Sigmoid colon (tissue), 7 donors: ENCODE measurements at regions of chr20 and their contacts with region 1.

Region 1: GRCh38 chr20:62010551-62011402 is 54.9 kb downstream of the TAF4 start:
- DNase-seq: no peak
- H3K4me3 ChIP-seq: no peak overlapping the region
- H3K27ac ChIP-seq: no peak overlapping the region
- H3K4me1 ChIP-seq: peaks cover 0 to 18% (median 10%) of the 10 kb centered on the region in 4 donors
- H3K27me3 ChIP-seq: no peaks in the 10 kb centered on the region
- CTCF ChIP-seq: peak; percentile 16 to 66 (median 58)
- EP300 ChIP-seq: no peak
- POLR2A ChIP-seq: no peak

Region 2: DNA sequence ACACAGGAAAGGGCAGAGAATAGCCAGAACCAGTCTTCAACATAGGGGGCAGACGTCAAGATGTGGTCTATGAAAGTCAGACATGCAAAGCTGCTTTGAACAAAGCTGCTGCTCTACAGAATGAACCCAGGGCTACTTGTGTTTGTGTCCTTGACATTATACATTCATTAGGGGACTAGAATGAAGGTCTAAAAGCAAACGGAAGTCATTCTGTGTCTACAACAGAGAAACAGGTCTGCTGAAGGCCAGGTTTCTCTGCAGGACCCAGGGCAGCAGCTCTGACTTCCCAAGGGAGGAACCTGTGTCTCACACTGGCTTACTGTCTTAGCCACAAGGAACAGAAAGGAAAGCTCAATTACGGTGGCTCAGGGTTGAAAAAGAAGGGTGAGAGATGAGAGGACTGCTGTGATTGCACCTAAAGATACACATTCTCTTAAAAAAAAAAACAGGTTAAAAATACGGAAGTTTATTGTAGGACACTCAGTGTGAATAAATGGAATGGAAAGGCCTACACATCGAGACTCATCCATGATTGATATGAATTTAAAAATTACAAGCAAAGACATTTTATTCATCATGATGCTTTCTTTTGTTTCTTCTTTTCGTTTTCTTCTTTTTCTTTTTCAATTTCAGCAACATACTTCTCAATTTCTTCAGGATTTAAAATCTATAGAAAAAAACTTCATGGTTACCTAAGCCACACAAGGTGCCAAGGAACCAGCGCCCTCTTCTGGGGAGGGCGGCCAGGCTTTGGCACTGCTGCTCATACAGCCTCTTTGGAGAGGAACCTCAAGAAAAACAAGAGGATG is 125.7 kb after region 1 on chr20:
- intact Hi-C with region 1: loop called (anchors 2 kb)
- DNase-seq: no peak
- H3K4me3 ChIP-seq: no peak overlapping the region
- H3K27ac ChIP-seq: peak overlapping the region in 1 of 4 donors; percentile 17
- H3K4me1 ChIP-seq: peaks cover 0 to 27% (median 11%) of the 10 kb centered on the region in 4 donors
- H3K27me3 ChIP-seq: no peaks in the 10 kb centered on the region
- CTCF ChIP-seq: peak; percentile 36 to 79 (median 66)
- EP300 ChIP-seq: no peak
- POLR2A ChIP-seq: no peak

Region 3: GRCh38 chr20:62156592-62157386 is 146.0 kb after region 1 on chr20:
- intact Hi-C with region 1: loop called (anchors 5 kb)
- DNase-seq: no peak
- H3K4me3 ChIP-seq: no peak overlapping the region
- H3K27ac ChIP-seq: no peak overlapping the region
- H3K4me1 ChIP-seq: peaks cover 0 to 12% (median 12%) of the 10 kb centered on the region in 4 donors
- H3K27me3 ChIP-seq: no peaks in the 10 kb centered on the region
- CTCF ChIP-seq: peak; percentile 38 to 70 (median 50)
- EP300 ChIP-seq: no peak
- POLR2A ChIP-seq: no peak

Region 4: GRCh38 chr20:62186887-62187866 is 176.4 kb after region 1 on chr20:
- intact Hi-C with region 1: no loop called
- DNase-seq: no peak
- H3K4me3 ChIP-seq: no peak overlapping the region
- H3K27ac ChIP-seq: no peak overlapping the region
- H3K4me1 ChIP-seq: peaks cover 0 to 20% (median 17%) of the 10 kb centered on the region in 4 donors
- H3K27me3 ChIP-seq: no peaks in the 10 kb centered on the region
- CTCF ChIP-seq: no peak
- EP300 ChIP-seq: no peak
- POLR2A ChIP-seq: no peak

Region 5: DNA sequence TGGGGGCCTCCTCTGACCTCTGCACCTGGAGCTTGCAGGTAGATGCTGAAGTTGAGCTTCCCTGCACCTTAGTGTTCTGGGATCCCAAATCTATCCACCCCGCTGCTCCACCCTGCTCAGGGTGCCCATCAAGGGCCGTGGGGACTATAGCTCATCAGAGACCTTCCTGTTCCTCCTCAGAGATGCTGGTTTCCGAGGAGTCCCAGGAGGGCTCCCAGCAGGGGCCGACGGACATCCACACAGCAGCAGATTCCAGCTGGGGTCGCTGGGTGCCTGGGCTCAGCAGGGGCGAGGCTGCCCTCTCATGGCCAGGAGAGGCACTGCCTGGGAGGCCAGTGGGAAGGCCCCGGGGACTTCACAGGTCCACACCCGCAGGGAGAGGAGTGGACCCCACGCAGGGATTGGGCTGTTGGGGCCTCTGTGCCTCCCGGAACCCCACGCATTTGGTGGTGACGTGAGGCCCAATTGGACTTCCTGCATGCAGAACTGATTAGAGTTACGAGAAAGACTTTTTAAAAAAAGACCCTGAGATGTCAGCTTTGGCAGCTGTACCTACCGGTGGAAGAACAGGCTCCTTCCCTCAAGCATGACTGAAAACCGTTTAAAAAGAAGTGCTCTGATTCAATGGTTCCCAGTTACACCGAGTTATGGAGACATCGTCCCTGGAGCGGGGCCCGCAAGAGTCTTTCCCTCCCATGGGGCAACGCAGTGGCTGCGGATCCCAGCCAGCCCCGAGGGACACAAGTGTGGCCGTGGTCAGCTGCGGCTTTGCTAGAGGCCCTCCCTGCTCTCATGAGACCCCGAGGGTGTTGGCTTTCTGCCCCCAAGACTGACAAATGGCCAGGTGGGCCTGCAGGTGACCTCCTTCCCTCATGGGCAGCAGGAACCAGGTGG is 606.2 kb after region 1 on chr20:
- intact Hi-C with region 1: no loop called
- DNase-seq: peak; percentile 88
- H3K4me3 ChIP-seq: no peak overlapping the region
- H3K27ac ChIP-seq: peak overlapping the region; percentile 40 to 52 (median 49)
- H3K4me1 ChIP-seq: peaks cover 0 to 8% (median 2%) of the 10 kb centered on the region in 4 donors
- H3K27me3 ChIP-seq: no peaks in the 10 kb centered on the region
- CTCF ChIP-seq: peak; percentile 91 to 97 (median 94)
- EP300 ChIP-seq: peak in 1 of 4 donors; percentile 18
- POLR2A ChIP-seq: no peak